ENCODE measurements at regions of chr7 and their contacts with region 1.

Region 1: DNA sequence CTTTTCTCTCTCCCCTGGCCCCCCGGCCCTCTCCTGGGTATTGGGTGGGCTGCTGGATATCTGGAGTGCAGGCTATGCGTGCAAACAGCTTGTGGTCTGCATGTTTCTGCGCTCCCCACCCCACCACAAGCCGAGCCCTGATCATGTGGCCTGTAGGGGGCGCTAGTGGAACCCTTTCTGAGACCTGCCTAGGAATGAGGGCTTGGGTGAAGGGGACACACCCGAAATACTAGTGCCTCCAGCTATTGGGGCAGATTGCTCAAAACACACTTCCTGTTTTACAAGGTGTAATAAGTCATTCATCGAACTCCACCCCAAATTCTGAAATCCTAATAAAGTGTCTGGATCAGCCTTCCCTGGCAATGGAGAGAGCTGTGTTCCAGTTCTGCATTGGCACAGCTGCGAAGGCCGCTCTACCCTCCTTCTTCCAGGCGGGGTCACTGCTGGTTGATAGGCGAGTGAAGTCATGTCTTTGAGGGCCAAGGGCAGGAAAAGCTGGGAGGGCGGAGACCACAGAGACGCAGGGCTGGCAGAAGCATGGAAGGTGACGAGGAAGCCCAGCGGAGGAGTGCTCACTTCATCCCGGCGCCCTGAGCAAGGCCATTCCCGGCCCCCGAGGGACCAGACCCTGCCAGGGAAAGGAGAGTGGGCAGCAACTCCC is 19.8 kb upstream of the PRRT4 start:
- DNase-seq: peak; percentile 73
- ATAC-seq: peak; percentile 61
- H3K4me3 Mint-ChIP-seq: no peak overlapping the region
- H3K27ac Mint-ChIP-seq: no peak overlapping the region
- H3K4me1 Mint-ChIP-seq: no peaks in the 10 kb centered on the region
- H3K27me3 Mint-ChIP-seq: no peaks in the 10 kb centered on the region
- CTCF ChIP-seq: peak; percentile 83

Region 2: DNA sequence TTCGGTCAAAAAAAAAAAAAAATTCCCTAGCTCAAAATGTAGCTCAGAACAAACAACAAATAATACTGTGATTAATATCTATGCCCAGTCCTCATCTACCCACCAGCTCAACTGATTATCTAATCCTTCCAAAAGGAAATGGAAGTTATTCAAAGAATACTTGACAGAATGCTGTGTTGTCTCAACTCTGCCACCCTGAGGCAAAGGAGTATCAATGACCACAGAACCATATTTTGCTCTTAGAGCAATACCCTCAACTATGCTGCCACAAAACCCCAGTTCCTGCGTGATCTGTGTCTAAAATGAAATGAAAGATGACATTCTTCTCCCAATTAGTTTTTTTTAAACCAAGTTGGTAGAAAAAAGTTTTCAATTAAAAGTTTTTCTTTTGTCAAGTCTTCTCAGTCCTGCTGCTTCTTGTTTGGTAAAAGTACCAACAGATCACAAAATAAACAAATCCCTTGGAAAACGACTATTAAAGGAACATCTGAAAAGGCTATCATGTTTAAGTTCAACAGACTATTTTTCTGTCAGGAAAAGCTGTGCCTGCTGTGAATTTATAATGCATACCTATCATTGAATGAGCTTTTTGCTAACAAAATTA is 59.1 kb before region 1 on chr7:
- CTCF ChIA-PET with region 1: interaction called, 15 read pairs
- POLR2A ChIA-PET with region 1: no interaction called
- intact Hi-C with region 1: no loop called
- DNase-seq: peak; percentile 41
- ATAC-seq: peak; percentile 70
- H3K4me3 Mint-ChIP-seq: no peak overlapping the region
- H3K27ac Mint-ChIP-seq: peak overlapping the region; percentile 40
- H3K4me1 Mint-ChIP-seq: peaks cover 33% of the 10 kb centered on the region
- H3K27me3 Mint-ChIP-seq: no peaks in the 10 kb centered on the region
- CTCF ChIP-seq: peak; percentile 12

Region 3: DNA sequence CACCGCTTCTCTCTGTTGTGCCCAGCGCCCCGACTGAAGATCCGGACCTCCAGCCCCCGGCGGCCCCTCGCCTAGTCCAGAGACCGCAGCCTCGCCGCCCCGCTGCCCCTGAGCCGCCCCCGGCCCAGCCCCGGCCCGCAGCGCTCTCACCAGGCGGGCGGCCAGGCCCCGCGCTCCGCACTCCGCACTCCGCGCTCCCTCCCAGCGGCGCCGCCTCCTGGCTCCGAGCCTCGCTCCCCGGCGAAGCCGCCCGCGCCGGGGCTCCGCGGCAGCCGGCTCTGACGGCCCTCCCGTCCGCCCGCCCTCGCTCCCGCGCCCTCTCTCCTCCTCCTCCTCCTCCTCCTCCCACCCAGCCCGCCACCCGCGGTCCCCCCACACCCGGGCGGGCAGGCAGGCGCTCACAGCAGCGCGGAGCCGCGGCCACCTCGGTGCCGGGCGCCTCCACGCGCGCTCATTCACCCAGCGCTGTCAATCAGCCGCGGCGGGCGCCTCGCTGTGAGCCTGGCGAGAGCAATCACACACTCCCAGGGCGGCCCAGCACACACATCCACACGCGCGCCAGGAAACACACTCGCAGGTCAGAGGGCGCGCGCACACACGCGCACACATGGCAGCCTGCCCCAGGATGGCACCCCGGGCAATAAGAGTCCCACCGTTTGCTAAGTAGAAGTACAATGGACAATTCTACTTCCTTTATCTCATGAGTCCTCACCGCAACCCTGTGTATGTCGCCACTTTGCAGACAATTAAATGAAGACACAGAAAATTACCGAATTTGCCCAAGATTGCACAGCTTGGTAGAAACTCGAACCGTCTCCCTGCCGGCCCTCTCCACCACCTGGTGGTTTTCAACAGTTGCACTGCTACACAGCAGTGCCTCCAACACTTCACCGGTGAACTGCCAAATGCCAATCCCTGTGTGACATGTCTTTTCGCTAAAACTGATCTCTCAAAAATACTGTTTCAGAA is 19.6 kb before region 1 on chr7 and contains the start of gene PRRT4:
- CTCF ChIA-PET with region 1: interaction called, 52 read pairs
- POLR2A ChIA-PET with region 1: no interaction called
- intact Hi-C with region 1: no loop called
- DNase-seq: peak; percentile 45
- ATAC-seq: peak; percentile 63
- H3K4me3 Mint-ChIP-seq: peak within 1 kb of the TSS; percentile 64
- H3K27ac Mint-ChIP-seq: peak within 1 kb of the TSS; percentile 15
- H3K4me1 Mint-ChIP-seq: peaks cover 19% of the 10 kb centered on the region
- H3K27me3 Mint-ChIP-seq: peaks cover 51% of the 10 kb centered on the region
- CTCF ChIP-seq: no peak
- total RNA-seq, gene PRRT4: 0.20 to 0.69 TPM